ENCODE measurements at regions of chr6 and their contacts with region 1.

Region 1: DNA sequence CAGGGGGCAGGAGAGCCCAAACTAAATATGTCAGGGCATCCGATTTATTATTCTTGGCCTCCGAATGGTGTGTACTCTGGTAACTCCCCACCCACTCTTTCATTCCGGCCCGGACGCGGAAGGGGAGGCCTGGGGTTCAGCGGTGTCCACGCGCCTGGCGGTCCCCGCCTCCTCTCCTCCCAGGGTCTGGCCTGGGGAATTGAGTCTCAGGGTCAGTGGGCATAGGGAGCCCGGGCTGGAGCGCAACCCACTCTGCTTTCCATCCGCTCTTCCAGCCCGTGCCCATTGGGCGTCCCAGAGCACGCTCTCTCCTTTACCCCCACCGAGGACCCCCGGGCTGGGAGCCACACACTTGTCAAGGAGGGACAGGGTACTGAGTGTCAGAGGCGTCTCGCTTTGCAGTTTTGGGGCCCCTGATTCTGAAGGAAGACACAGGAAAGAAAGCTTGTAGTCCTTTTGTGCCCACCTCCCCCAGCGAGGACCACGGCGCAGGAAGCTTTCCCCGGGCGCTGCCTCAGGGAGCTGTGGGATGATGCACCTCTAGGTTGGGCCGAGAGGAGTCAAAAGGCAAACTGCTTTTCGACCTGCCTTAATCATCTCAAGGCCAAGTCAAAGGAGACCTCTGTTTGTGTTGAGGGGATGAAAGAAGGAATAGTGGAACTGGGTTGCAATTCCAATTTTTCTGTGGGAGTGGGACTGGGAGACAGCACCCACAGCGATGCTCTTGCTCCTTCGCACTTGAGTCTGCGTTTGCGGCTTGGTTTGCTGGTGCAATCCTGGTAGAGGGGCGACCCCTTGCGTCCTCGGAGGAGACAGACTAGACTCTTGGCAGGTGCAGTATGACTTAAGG is 2.5 kb downstream of the RSPO3 start:
- DNase-seq: peak; percentile 79 to 88
- ATAC-seq: peak; percentile 81 to 87 (median 81)
- H3K4me3 ChIP-seq: peak overlapping the region; percentile 81
- H3K27ac ChIP-seq: peak overlapping the region; percentile 84
- H3K4me1 ChIP-seq: peaks cover 32% of the 10 kb centered on the region
- H3K27me3 ChIP-seq: peaks cover 0 to 20% (median 0%) of the 10 kb centered on the region in 3 donors
- CTCF ChIP-seq: peak; percentile 81

Region 2: GRCh38 chr6:126033696-126034095 is 1087.3 kb before region 1 on chr6:
- intact Hi-C with region 1: loop called in 1 of 2 experiments (anchors 10 kb)
- DNase-seq: no peak
- ATAC-seq: peak; percentile 76 to 94 (median 88)
- H3K4me3 ChIP-seq: no peak overlapping the region
- H3K27ac ChIP-seq: no peak overlapping the region
- H3K4me1 ChIP-seq: no peaks in the 10 kb centered on the region
- H3K27me3 ChIP-seq: no peaks in the 10 kb centered on the region
- CTCF ChIP-seq: peak; percentile 60

Region 3: DNA sequence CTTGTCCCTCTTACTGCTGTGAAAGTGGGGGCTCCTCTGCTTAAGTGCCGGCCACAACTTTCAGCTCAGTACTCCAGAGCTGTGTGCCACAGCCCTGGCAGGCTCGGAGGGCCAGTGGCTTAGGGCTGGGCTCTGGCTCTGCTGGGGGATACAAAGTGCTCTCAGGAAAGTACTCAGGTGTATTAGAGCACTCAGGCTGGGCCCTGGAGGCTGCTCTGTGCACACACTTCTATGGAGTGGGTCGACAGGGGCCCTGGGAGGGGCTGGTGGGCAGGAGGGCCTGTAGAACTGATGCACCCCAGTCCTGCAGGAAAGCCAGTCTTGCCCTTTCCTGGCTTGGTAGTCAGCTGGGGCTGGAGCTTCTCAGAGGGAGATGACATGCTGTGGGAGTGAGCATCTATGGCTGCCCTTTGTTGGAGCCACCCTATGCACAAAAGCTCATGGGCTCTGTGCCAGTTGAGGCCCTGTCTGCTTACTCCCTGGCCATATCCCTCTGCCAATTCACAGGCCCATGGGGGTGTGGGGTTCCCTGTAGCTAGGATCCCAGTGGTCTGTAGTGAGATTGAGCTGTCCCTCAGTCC is 759.1 kb before region 1 on chr6:
- intact Hi-C with region 1: loop called in 1 of 2 experiments (anchors 5 kb)
- DNase-seq: no peak
- ATAC-seq: no peak
- H3K4me3 ChIP-seq: no peak overlapping the region
- H3K27ac ChIP-seq: no peak overlapping the region
- H3K4me1 ChIP-seq: no peaks in the 10 kb centered on the region
- H3K27me3 ChIP-seq: no peaks in the 10 kb centered on the region
- CTCF ChIP-seq: no peak

Region 4: GRCh38 chr6:126804332-126805064 is 316.5 kb before region 1 on chr6:
- intact Hi-C with region 1: loop called (anchors 2 to 5 kb)
- DNase-seq: no peak
- ATAC-seq: peak; percentile 48 to 91 (median 61)
- H3K4me3 ChIP-seq: no peak overlapping the region
- H3K27ac ChIP-seq: no peak overlapping the region
- H3K4me1 ChIP-seq: no peaks in the 10 kb centered on the region
- H3K27me3 ChIP-seq: no peaks in the 10 kb centered on the region
- CTCF ChIP-seq: peak; percentile 68

Region 5: DNA sequence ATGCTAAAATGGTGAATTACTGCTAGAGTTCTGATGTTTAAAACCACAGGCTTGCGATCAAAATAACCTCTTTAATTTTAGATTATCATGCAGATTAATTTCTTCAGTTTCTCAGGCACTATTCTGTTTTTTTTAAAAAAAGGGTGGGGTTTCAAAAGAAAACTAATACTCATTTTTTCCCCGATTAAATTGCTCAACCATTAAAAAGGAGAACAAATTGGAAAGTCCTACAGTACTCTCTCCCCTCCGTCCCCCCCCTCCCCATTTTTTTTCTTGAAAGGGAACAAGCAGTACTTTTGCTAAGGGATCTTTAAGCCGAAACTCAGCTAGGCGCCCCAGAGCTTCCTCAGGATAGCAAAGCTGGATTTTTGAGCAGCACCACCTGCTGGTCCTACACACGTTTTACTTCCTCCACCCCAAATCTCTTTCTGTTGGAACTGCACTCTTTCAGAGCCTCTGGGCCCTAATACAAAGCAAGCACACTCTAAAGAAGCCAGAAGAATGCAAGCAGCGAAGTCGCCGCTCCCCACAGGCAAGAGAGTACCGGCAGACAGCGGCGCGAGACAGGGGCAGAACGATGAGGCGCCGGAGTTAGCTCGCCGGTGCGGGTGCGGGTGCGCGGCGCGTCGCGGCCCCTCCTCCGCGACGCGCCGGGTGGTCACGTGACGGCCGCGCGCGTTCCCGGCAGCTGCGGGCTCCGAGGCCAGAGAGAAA is 145.3 kb after region 1 on chr6 and contains the start of gene RNF146:
- intact Hi-C with region 1: loop called in 1 of 2 experiments (anchors 10 kb)
- DNase-seq: peak; percentile 87 to 93
- ATAC-seq: peak; percentile 92 to 94 (median 93)
- H3K4me3 ChIP-seq: peak within 1 kb of the TSS; percentile 92
- H3K27ac ChIP-seq: peak within 1 kb of the TSS; percentile 100
- H3K4me1 ChIP-seq: peaks cover 30% of the 10 kb centered on the region
- H3K27me3 ChIP-seq: no peaks in the 10 kb centered on the region
- CTCF ChIP-seq: peak; percentile 70
- total RNA-seq, gene RNF146: 64.3 to 80.9 (median 73.7) TPM